ENCODE measurements at regions of chr6 and their contacts with region 1.

Region 1: GRCh38 chr6:11824986-11825385 is 46.4 kb upstream of the ADTRP start:
- DNase-seq: peak; percentile 51
- H3K4me3 Mint-ChIP-seq: no peak overlapping the region
- H3K27ac Mint-ChIP-seq: peak overlapping the region; percentile 61
- H3K4me1 Mint-ChIP-seq: peaks cover 11% of the 10 kb centered on the region
- H3K27me3 Mint-ChIP-seq: peaks cover 2% of the 10 kb centered on the region

Region 2: DNA sequence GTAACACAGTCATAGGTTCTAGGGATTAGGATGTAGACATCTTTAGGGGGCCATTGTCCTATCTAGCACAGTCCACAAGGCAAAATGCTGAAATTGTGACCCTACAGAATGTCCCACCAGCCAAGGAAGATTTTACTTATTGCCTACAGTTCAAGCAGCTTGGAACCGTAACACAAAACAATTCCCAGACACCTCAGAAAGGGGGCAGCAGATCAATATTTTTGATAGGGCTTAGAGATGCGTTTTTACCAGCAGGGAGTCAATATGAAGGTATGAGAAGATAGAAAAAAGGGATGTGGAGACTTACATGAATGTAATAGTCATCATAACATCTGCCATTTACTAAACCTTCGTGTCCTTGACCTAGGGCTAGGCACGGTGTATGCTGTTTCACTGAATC is 206.5 kb before region 1 on chr6:
- CTCF ChIA-PET with region 1: no interaction called
- POLR2A ChIA-PET with region 1: no interaction called
- intact Hi-C with region 1: no loop called
- DNase-seq: no peak
- H3K4me3 Mint-ChIP-seq: no peak overlapping the region
- H3K27ac Mint-ChIP-seq: no peak overlapping the region
- H3K4me1 Mint-ChIP-seq: no peaks in the 10 kb centered on the region
- H3K27me3 Mint-ChIP-seq: no peaks in the 10 kb centered on the region

Region 3: GRCh38 chr6:11766589-11767450 is 58.2 kb before region 1 on chr6:
- CTCF ChIA-PET with region 1: no interaction called
- POLR2A ChIA-PET with region 1: interaction called, 4 read pairs
- intact Hi-C with region 1: loop called (anchors 1 kb)
- DNase-seq: no peak
- H3K4me3 Mint-ChIP-seq: no peak overlapping the region
- H3K27ac Mint-ChIP-seq: no peak overlapping the region
- H3K4me1 Mint-ChIP-seq: peaks cover 39% of the 10 kb centered on the region
- H3K27me3 Mint-ChIP-seq: peaks cover 8% of the 10 kb centered on the region